Activated CD4-positive, alpha-beta T cell treated with anti-CD3 and anti-CD28 coated beads, Interleukin-2, amount 10 ng/mL, durations not matched to agents 24 days and 14 days (primary cell): ENCODE measurements at regions of chr4 and their contacts with region 1.

Region 1: DNA sequence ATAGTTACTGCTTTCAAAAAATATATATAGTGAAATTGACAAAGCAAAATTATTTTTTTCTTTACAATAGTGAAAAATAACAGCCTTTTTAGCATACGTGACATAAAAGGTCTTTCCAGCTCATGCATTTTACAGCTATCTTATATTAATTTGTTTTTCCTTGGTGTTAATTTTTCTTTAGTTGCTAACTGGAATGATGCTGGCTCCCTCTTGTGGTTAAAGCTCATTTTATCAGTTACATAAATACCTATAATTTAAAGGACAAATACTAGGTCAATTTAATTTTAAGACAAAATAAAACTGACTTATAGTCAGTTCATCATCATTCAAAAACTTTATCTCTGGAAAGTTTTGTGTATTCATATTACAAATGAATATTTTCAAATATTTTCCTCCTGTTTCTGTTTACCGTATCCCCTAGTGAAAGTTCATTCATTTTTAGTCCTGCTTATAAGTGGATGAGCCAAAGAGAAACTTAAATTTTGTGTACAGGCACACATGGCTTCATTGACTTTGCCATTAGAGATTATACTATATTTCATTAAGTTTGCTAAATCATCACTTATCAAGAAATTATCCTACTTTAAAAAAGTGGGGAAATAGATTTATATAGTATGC is 9.9 kb upstream of the ANAPC4 start:
- DNase-seq: no peak
- H3K4me3 Mint-ChIP-seq: no peak overlapping the region
- H3K27ac Mint-ChIP-seq: no peak overlapping the region
- H3K4me1 Mint-ChIP-seq: no peaks in the 10 kb centered on the region
- H3K27me3 Mint-ChIP-seq: no peaks in the 10 kb centered on the region

Region 2: DNA sequence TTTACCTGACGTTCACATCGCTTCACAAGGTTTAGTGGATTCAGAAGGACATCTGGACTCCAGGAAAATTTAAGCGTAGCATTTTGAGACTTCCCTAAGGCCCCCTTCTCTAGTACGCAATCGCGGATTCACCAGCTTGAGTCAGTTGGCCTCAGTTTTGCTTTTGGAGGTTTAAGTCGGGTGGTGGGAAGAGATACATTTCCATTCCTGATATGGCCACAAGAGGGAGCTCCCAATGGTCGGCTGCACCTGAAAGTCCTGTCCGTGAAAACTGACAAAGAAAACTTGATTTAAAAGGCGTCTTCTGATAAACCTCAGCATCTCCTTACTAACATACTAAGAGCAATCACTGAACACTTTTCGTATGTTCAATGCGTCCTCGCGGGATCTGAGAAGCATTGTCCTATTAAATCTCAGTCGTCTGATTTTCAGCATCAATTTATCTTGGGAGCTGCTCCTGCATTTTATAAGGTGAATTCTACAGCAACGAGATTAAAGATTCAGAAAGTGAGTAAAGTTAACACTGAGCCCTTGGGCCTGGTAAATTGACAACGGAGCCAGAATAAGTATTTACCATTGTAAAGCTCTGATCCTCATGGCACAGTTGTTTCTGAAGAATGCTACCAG is 386.9 kb before region 1 on chr4:
- intact Hi-C with region 1: loop called (anchors 1 kb)
- DNase-seq: peak; percentile 86
- H3K4me3 Mint-ChIP-seq: peak overlapping the region; percentile 26
- H3K27ac Mint-ChIP-seq: no peak overlapping the region
- H3K4me1 Mint-ChIP-seq: peaks cover 10% of the 10 kb centered on the region
- H3K27me3 Mint-ChIP-seq: peaks cover 19% of the 10 kb centered on the region

Region 3: GRCh38 chr4:25180524-25181131 is 186.5 kb before region 1 on chr4:
- intact Hi-C with region 1: loop called (anchors 1 kb)
- DNase-seq: peak; percentile 78
- H3K4me3 Mint-ChIP-seq: no peak overlapping the region
- H3K27ac Mint-ChIP-seq: no peak overlapping the region
- H3K4me1 Mint-ChIP-seq: peaks cover 19% of the 10 kb centered on the region
- H3K27me3 Mint-ChIP-seq: no peaks in the 10 kb centered on the region

Region 4: GRCh38 chr4:25312496-25313200 is 54.5 kb before region 1 on chr4 and contains the start of gene ZCCHC4:
- intact Hi-C with region 1: loop called (anchors 2 kb)
- DNase-seq: peak; percentile 97
- H3K4me3 Mint-ChIP-seq: peak within 1 kb of the TSS; percentile 100
- H3K27ac Mint-ChIP-seq: peak within 1 kb of the TSS; percentile 97
- H3K4me1 Mint-ChIP-seq: peaks cover 11% of the 10 kb centered on the region
- H3K27me3 Mint-ChIP-seq: no peaks in the 10 kb centered on the region
- total RNA-seq, gene ZCCHC4: 15.5 and 15.6 TPM in 2 replicates

Region 5: GRCh38 chr4:25466966-25467697 is 100.0 kb after region 1 on chr4:
- intact Hi-C with region 1: no loop called
- DNase-seq: no peak
- H3K4me3 Mint-ChIP-seq: no peak overlapping the region
- H3K27ac Mint-ChIP-seq: no peak overlapping the region
- H3K4me1 Mint-ChIP-seq: no peaks in the 10 kb centered on the region
- H3K27me3 Mint-ChIP-seq: no peaks in the 10 kb centered on the region

Region 6: DNA sequence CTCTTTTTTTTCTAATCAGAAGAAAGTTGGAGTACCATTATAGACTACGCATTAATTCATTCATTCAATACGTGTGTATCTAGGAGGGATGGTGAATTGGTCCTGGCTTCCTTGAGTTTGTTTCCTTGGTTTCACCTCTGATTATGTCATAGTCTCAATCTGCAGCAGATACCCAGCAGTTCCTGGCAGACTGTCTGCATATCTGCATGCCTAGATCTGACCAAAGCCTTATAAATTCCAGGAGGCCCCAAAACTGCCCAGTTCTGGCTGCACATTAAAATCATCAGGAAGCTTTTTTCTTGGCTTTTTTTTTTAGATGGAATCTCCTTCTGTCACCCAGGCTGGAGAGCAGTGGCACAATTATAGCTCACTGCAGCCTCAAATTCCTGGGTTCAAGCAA is 261.3 kb after region 1 on chr4:
- intact Hi-C with region 1: no loop called
- DNase-seq: no peak
- H3K4me3 Mint-ChIP-seq: no peak overlapping the region
- H3K27ac Mint-ChIP-seq: no peak overlapping the region
- H3K4me1 Mint-ChIP-seq: no peaks in the 10 kb centered on the region
- H3K27me3 Mint-ChIP-seq: peaks cover 2% of the 10 kb centered on the region

Region 7: GRCh38 chr4:25842229-25842845 is 475.2 kb after region 1 on chr4:
- intact Hi-C with region 1: no loop called
- DNase-seq: peak; percentile 81
- H3K4me3 Mint-ChIP-seq: peak overlapping the region; percentile 47
- H3K27ac Mint-ChIP-seq: peak overlapping the region; percentile 64
- H3K4me1 Mint-ChIP-seq: peaks cover 40% of the 10 kb centered on the region
- H3K27me3 Mint-ChIP-seq: no peaks in the 10 kb centered on the region

Region 8: GRCh38 chr4:26717332-26717731 is 1350.2 kb after region 1 on chr4:
- intact Hi-C with region 1: no loop called
- DNase-seq: no peak
- H3K4me3 Mint-ChIP-seq: no peak overlapping the region
- H3K27ac Mint-ChIP-seq: no peak overlapping the region
- H3K4me1 Mint-ChIP-seq: no peaks in the 10 kb centered on the region
- H3K27me3 Mint-ChIP-seq: no peaks in the 10 kb centered on the region